Heart left ventricle (tissue), 16 donors: ENCODE measurements at regions of chr4 and their contacts with region 1.

Region 1: DNA sequence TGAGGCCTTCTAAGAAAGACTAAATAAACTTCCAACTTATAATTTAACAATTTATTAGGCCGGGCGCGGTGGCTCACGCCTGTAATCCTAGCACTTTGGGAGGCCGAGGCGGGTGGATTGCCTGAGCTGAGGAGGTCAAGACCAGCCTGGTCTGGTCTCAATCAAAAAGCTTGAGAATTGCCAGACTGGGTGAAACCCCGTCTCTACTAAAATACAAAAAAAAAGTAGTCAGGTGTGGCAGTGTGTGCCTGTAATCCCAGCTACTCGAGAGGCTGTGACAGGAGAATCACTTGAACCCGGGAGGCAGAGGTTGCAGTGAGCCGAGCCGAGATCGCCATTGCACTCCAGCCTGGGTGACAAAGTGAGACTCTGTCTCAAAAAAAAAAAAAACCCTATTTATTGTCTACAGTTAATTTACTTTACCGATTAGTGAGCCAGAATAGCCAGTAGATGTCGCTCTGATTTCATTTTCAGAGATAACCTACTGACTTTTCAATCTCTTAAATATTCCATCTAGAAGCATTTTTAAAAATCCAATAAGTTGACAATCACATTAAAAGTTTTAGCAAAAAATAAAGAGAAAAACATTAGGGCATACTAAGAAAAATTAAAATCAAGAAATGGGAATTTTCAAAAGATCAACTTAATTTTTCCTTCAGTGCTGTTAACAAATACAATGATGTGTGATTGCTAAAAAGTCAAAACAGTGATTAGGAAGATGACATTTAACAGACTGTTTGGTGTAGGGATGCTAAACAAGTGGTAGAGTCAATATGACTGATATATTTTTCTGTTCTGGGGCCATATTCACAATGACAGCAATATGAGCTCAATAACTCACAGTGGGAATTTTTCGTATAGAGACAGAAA is 4.3 kb upstream of the SHROOM3 start:
- DNase-seq: no peak
- ATAC-seq: peak in 1 of 4 donors; percentile 41
- H3K4me3 ChIP-seq: no peak overlapping the region
- H3K27ac ChIP-seq: no peak overlapping the region
- H3K4me1 ChIP-seq: peaks cover 0 to 11% (median 0%) of the 10 kb centered on the region in 12 donors
- H3K27me3 ChIP-seq: peaks cover 0 to 14% (median 0%) of the 10 kb centered on the region in 9 donors
- CTCF ChIP-seq: peak; percentile 41 to 76 (median 68)
- POLR2A ChIP-seq: no peak

Region 2: DNA sequence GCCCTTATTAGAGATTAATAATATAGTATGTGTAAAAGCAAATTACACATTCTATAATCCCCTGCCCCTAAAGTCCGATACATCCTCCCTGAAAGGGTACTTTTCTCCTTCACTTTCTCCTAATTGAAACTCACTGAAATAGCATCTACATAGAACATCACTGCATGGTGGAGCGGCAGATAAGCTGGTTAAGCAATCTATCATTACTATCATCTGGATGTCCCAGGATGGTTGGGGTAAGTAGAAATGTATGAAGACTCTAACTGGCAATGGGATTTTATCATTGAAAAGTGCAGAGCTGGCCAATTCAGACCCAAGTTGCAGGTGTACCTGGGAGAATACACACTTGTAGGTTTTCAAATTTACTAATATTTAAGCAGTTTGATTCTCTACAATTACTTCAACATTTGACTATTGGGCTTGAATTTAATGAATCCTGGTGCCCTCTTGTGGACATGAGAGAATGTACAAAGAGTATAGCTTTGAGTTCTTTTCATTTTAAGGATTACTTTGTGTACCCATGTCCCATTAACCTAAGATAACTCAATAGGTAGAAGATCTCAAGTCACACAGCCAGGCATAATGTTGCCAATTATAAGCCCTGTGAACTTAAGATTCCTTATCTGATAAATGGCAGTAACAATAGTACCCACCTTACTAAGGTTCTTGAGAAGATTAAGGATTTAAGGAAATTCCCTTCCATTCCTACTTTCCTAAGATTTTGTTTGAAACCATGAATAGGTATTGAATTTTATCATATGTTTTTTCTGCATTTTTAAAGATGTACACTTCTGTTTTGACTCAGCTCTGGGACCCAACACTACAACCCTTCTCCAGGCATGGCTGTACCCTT is 74.1 kb after region 1 on chr4:
- intact Hi-C with region 1: loop called (anchors 1 to 5 kb)
- DNase-seq: no peak
- ATAC-seq: peak in 2 of 4 donors; percentile 45 to 47
- H3K4me3 ChIP-seq: no peak overlapping the region
- H3K27ac ChIP-seq: no peak overlapping the region
- H3K4me1 ChIP-seq: no peaks in the 10 kb centered on the region
- H3K27me3 ChIP-seq: no peaks in the 10 kb centered on the region
- CTCF ChIP-seq: peak; percentile 49 to 78 (median 67)
- POLR2A ChIP-seq: no peak

Region 3: DNA sequence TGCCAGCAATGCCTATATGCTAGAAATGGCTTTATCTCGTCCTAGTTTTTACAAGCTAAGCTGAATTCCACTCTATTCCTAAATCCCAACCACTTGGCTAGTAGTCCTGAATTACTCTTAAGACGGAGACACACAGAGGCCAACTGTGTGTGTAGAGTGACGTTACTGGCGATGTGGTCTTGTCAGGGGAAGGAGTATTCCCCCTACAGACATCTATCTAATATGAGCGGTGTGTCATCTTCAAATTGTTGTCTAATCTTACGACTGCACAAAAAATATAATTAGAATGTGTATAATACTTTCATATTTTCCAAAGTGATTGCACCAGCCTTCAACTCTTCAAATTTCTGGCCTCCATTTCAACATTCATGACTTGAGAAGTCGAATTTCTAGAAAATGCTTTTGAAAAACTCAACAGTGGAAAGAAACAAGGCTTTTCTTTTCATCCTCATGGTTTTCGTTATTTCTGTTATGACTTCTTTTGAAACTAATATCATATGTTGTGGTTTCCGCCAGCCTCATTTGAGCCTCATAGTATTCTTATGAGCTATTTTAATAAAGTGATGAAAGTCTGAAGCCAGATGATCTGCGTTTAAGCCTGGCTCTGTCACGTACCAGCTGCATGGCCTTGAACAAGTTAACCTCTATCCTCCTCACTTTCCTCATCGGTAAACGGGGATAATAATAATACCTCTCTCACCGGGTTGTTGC is 334.9 kb after region 1 on chr4:
- intact Hi-C with region 1: loop called in 1 of 10 experiments (anchors 10 kb)
- DNase-seq: no peak
- ATAC-seq: peak in 2 of 4 donors; percentile 50 to 68
- H3K4me3 ChIP-seq: no peak overlapping the region
- H3K27ac ChIP-seq: peak overlapping the region in 3 of 12 donors; percentile 34 to 41 (median 38)
- H3K4me1 ChIP-seq: peaks cover 0 to 11% (median 0%) of the 10 kb centered on the region in 12 donors
- H3K27me3 ChIP-seq: no peaks in the 10 kb centered on the region
- CTCF ChIP-seq: no peak
- POLR2A ChIP-seq: no peak

Region 4: DNA sequence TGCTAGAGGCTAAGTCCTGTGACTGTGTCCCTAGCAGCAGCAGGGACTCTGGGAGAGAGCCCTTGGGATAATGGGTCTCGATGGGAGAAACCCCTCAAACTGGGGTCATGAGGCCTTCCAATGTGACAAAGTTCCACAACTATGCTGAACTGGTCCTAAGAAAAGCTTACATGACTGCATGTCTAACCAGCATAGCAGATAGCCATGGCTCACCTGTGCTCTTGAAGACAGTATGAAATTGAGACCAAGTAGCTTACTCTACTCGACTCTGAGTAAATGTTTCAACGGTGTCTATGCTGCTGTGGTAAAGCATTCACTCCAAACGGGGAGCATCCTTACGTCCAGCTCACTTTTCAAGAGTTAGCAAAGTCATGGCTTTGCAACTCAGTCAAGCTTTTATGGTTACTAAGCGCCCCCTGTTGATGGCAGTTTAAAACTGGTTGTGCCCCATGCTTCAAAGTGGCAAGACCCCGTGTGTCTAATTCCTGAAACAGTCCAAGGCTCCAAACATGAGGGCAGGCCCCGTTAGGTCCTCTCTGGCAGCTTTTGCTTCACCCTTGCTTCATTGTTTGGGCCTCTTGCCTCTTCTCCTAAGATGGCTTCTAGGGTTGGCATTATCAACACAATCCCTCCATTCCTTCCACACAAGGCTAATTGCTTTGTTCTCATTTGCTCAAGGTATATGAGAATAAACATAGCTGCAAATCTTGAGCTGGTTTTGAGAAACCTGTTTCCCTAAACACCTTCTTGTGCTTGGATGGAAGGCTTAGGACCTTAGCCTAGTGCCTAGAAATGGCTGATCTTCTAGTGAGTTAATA is 772.8 kb after region 1 on chr4:
- intact Hi-C with region 1: loop called in 5 of 10 experiments (anchors 5 to 10 kb)
- DNase-seq: peak in 4 of 5 donors; percentile 44 to 65 (median 54)
- ATAC-seq: peak; percentile 47 to 85 (median 82)
- H3K4me3 ChIP-seq: no peak overlapping the region
- H3K27ac ChIP-seq: no peak overlapping the region
- H3K4me1 ChIP-seq: peaks cover 0 to 4% (median 0%) of the 10 kb centered on the region in 12 donors
- H3K27me3 ChIP-seq: peaks cover 0 to 4% (median 0%) of the 10 kb centered on the region in 9 donors
- CTCF ChIP-seq: peak; percentile 54 to 83 (median 74)
- POLR2A ChIP-seq: no peak